ENCODE measurements at regions of chr9 and their contacts with region 1.

Region 1: DNA sequence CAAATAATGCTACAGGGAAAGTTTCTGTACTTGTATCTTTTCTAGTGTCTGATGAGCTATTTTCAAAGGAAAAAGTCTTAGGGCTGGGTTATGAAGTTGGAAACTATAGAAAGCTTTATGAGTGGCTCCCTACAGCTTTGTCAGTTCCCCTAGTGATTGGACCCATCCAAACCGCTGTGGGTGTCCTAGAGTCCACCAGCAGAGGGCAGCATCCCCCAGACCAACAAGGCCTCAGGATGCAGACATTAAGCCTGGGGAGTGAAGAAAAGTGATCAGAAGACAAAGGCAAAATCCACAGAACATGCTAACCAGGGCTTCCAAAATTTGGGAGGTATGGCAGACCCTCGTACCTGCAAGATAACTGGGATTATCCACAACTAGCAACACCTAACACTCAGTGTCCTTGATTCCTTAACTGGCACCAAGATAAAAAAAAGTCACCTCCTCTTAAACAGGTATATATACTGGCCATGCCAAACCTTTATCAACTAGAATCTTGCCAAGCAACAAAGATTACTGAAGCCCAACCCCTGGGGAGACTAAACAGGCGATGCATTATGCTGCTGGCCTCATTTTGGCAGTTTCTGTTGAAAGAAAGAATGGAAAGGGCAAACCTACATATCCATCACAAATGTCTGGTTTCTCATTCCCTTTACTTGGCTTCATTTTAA is 110.4 kb upstream of the NR5A1 start:
- DNase-seq: peak; percentile 90
- ATAC-seq: peak; percentile 90
- H3K4me3 Mint-ChIP-seq: no peak overlapping the region
- H3K27ac Mint-ChIP-seq: peak overlapping the region; percentile 94
- H3K4me1 Mint-ChIP-seq: peaks cover 56% of the 10 kb centered on the region
- H3K27me3 Mint-ChIP-seq: no peaks in the 10 kb centered on the region
- CTCF ChIP-seq: peak; percentile 89

Region 2: GRCh38 chr9:124480621-124480981 is 137.0 kb before region 1 on chr9:
- CTCF ChIA-PET with region 1: no interaction called
- POLR2A ChIA-PET with region 1: no interaction called
- DNase-seq: peak; percentile 73
- ATAC-seq: peak; percentile 75
- H3K4me3 Mint-ChIP-seq: no peak overlapping the region
- H3K27ac Mint-ChIP-seq: no peak overlapping the region
- H3K4me1 Mint-ChIP-seq: peaks cover 28% of the 10 kb centered on the region
- H3K27me3 Mint-ChIP-seq: peaks cover 59% of the 10 kb centered on the region
- CTCF ChIP-seq: peak; percentile 27; the same call in 1 of the 2 replicates

Region 3: DNA sequence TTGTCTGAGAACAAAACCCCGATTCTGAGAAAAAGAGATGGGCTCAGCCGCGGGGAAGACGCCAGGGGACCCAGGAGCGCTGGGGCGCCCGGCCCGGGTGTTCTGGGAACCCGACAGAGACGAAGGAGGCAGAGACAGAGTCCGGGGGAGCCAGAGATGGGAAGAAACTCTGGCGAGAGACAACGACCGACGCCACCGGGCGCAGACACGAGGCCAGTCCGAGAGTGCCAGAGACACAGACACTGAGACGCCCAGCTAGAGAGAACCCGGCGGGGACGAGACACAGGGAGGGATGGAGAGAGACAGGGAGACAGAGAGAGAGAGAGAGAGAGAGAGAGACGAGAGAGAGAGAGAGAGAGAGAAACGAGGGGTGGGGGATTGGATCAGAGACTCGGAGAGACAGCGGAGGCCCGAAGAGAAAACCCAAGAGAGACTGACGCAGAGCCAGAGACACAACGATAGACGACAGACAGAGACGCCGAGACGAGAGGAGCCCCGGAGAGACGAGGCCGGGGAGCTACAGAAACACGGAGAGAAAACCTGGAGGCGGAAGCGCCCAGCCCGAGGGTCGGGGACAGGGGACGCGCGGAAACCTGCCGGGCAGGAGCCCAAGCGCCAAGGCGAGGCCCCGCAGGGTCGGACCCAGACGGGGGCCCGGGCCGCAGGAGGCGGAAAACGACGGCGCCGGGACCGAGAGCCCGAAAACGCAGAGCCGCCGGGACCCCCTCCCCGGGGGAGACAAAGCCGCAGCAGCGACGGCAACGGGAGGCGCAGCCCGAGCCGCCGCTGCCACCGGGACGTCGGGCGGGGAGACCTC is 113.7 kb before region 1 on chr9:
- CTCF ChIA-PET with region 1: no interaction called
- POLR2A ChIA-PET with region 1: no interaction called
- DNase-seq: peak; percentile 35
- ATAC-seq: peak; percentile 3; the same call in 1 of the 2 replicates
- H3K4me3 Mint-ChIP-seq: peak overlapping the region; percentile 85
- H3K27ac Mint-ChIP-seq: no peak overlapping the region
- H3K4me1 Mint-ChIP-seq: peaks cover 13% of the 10 kb centered on the region
- H3K27me3 Mint-ChIP-seq: peaks cover 59% of the 10 kb centered on the region
- CTCF ChIP-seq: no peak

Region 4: GRCh38 chr9:124544535-124544934 is 73.1 kb before region 1 on chr9:
- CTCF ChIA-PET with region 1: interaction called, 95 read pairs
- POLR2A ChIA-PET with region 1: interaction called, 3 read pairs
- DNase-seq: no peak
- ATAC-seq: no peak
- H3K4me3 Mint-ChIP-seq: no peak overlapping the region
- H3K27ac Mint-ChIP-seq: 0 out of 2 replicates have a peak overlapping the region, but pooled peaks have one; percentile 4
- H3K4me1 Mint-ChIP-seq: peaks cover 24% of the 10 kb centered on the region
- H3K27me3 Mint-ChIP-seq: no peaks in the 10 kb centered on the region
- CTCF ChIP-seq: no peak

Region 5: GRCh38 chr9:124567362-124567761 is 50.2 kb before region 1 on chr9:
- CTCF ChIA-PET with region 1: interaction called, 15 read pairs
- POLR2A ChIA-PET with region 1: no interaction called
- DNase-seq: no peak
- ATAC-seq: no peak
- H3K4me3 Mint-ChIP-seq: no peak overlapping the region
- H3K27ac Mint-ChIP-seq: peak overlapping the region; percentile 23
- H3K4me1 Mint-ChIP-seq: peaks cover 51% of the 10 kb centered on the region
- H3K27me3 Mint-ChIP-seq: no peaks in the 10 kb centered on the region
- CTCF ChIP-seq: no peak

Region 6: GRCh38 chr9:124605258-124605657 is 12.3 kb before region 1 on chr9:
- CTCF ChIA-PET with region 1: interaction called, 13 read pairs
- POLR2A ChIA-PET with region 1: no interaction called
- DNase-seq: no peak
- ATAC-seq: no peak
- H3K4me3 Mint-ChIP-seq: no peak overlapping the region
- H3K27ac Mint-ChIP-seq: peak overlapping the region; percentile 55
- H3K4me1 Mint-ChIP-seq: peaks cover 35% of the 10 kb centered on the region
- H3K27me3 Mint-ChIP-seq: no peaks in the 10 kb centered on the region
- CTCF ChIP-seq: no peak

Region 7: GRCh38 chr9:124676159-124676551 is 58.5 kb after region 1 on chr9:
- CTCF ChIA-PET with region 1: interaction called, 11 read pairs
- POLR2A ChIA-PET with region 1: no interaction called
- DNase-seq: no peak
- ATAC-seq: no peak
- H3K4me3 Mint-ChIP-seq: no peak overlapping the region
- H3K27ac Mint-ChIP-seq: no peak overlapping the region
- H3K4me1 Mint-ChIP-seq: peaks cover 17% of the 10 kb centered on the region
- H3K27me3 Mint-ChIP-seq: no peaks in the 10 kb centered on the region
- CTCF ChIP-seq: no peak

Region 8: DNA sequence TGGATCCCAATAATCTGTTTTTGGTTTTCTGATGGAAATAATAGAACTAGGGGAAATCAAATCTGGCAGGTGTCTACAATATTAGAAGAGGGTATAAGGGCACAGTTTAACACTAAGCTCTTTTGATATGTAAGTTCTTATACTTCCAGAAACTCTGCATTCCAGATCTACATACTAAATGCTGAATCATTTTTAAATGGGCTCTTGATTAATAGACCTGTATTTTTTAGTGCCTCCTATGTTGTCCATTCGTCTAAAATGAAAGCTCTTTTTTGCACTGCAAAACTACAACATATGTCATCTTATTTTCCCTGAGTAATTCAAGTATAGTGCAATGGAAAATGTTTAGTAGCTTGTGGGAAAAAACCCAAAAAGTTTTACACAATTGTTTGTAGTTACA is 109.3 kb after region 1 on chr9:
- CTCF ChIA-PET with region 1: no interaction called
- POLR2A ChIA-PET with region 1: no interaction called
- DNase-seq: no peak
- ATAC-seq: no peak
- H3K4me3 Mint-ChIP-seq: no peak overlapping the region
- H3K27ac Mint-ChIP-seq: no peak overlapping the region
- H3K4me1 Mint-ChIP-seq: peaks cover 30% of the 10 kb centered on the region
- H3K27me3 Mint-ChIP-seq: no peaks in the 10 kb centered on the region
- CTCF ChIP-seq: no peak

Region 9: GRCh38 chr9:124764774-124765438 is 147.3 kb after region 1 on chr9:
- CTCF ChIA-PET with region 1: interaction called, 24 read pairs
- POLR2A ChIA-PET with region 1: no interaction called
- DNase-seq: no peak
- ATAC-seq: 0 out of 2 replicates have a peak, but pooled peaks have one; percentile 12
- H3K4me3 Mint-ChIP-seq: peak overlapping the region; percentile 47
- H3K27ac Mint-ChIP-seq: 0 out of 2 replicates have a peak overlapping the region, but pooled peaks have one; percentile 46
- H3K4me1 Mint-ChIP-seq: peaks cover 93% of the 10 kb centered on the region
- H3K27me3 Mint-ChIP-seq: no peaks in the 10 kb centered on the region; the same call in none of the 2 replicates
- CTCF ChIP-seq: no peak

Measured in WTC11 (cell line).